Stomach (tissue), 19 donors: ENCODE measurements at regions of chr20 and their contacts with region 1.

Region 1: GRCh38 chr20:5191829-5192569 is 65.2 kb downstream of the CDS2 start:
- DNase-seq: peak; percentile 34 to 90
- H3K4me3 ChIP-seq: no peak overlapping the region
- H3K27ac ChIP-seq: peak overlapping the region in 4 of 5 donors; percentile 22 to 75 (median 54)
- H3K4me1 ChIP-seq: peaks cover 0 to 10% (median 7%) of the 10 kb centered on the region in 4 donors
- H3K27me3 ChIP-seq: no peaks in the 10 kb centered on the region
- CTCF ChIP-seq: peak in 5 of 7 experiments; percentile 54 to 87 (median 77)
- EP300 ChIP-seq: no peak
- POLR2A ChIP-seq: no peak

Region 2: DNA sequence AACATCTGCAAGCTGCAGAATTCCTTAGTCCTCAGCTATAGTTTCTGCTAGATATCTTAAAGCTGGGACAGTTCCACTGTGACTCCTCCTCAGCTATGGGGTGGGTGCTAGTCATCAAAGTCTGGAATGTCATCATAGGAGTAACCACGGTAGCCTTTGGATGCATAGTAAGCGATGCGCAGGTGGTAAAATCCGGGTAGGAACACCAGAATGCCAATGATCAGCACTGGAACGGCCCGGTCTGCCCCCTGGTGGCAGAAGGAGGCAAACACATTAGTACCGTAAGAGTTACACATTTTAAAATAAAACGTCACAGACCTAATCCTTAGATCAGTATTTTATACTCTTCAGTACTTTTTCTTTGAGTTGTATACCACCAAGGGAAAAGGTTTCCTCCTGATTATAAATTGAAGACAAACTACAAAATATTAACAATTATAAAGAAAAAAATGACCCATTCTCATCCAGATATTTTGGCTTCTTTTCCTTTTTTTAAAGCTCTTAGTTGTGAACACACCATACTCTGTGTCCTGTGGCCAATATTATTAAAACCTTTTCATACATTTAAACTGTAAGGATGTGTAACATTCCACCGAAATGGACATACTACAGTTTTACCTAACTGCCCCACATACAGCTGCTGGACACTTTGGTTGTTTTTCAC is 91.2 kb before region 1 on chr20:
- intact Hi-C with region 1: no loop called
- DNase-seq: peak; percentile 84 to 85
- H3K4me3 ChIP-seq: no peak overlapping the region
- H3K27ac ChIP-seq: peak overlapping the region in 1 of 5 donors; percentile 10
- H3K4me1 ChIP-seq: peaks cover 0 to 10% (median 0%) of the 10 kb centered on the region in 4 donors
- H3K27me3 ChIP-seq: no peaks in the 10 kb centered on the region
- CTCF ChIP-seq: peak in 5 of 7 experiments; percentile 76 to 92 (median 84)
- EP300 ChIP-seq: no peak
- POLR2A ChIP-seq: no peak

Region 3: GRCh38 chr20:5126512-5127203 is 65.3 kb before region 1 on chr20 and contains the start of gene CDS2:
- intact Hi-C with region 1: loop called (anchors 5 kb)
- DNase-seq: peak; percentile 100
- H3K4me3 ChIP-seq: peak within 1 kb of the TSS; percentile 81 to 98 (median 88)
- H3K27ac ChIP-seq: peak within 1 kb of the TSS; percentile 93 to 99 (median 97)
- H3K4me1 ChIP-seq: peaks cover 5 to 50% (median 37%) of the 10 kb centered on the region in 4 donors
- H3K27me3 ChIP-seq: no peaks in the 10 kb centered on the region
- CTCF ChIP-seq: peak in 5 of 7 experiments; percentile 26 to 68 (median 44)
- EP300 ChIP-seq: no peak
- POLR2A ChIP-seq: no peak
- total RNA-seq, gene CDS2: 11.3 to 88.1 (median 47.9) TPM